IMR-90 (cell line): ENCODE measurements at regions of chr19 and their contacts with region 1.

Region 1: GRCh38 chr19:54481322-54481930 is 8.3 kb upstream of the CDC42EP5 start:
- DNase-seq: peak; percentile 33
- ATAC-seq: peak; percentile 72; the same call in 1 of the 2 replicates
- H3K4me3 ChIP-seq: no peak overlapping the region
- H3K27ac ChIP-seq: no peak overlapping the region
- H3K4me1 ChIP-seq: no peaks in the 10 kb centered on the region
- H3K27me3 ChIP-seq: 0 out of 2 replicates have a peak, but pooled peaks cover 2% of the 10 kb centered on the region
- CTCF ChIP-seq: peak; percentile 60
- POLR2A ChIP-seq: no peak
- RAD21 ChIP-seq: peak; percentile 51

Region 2: DNA sequence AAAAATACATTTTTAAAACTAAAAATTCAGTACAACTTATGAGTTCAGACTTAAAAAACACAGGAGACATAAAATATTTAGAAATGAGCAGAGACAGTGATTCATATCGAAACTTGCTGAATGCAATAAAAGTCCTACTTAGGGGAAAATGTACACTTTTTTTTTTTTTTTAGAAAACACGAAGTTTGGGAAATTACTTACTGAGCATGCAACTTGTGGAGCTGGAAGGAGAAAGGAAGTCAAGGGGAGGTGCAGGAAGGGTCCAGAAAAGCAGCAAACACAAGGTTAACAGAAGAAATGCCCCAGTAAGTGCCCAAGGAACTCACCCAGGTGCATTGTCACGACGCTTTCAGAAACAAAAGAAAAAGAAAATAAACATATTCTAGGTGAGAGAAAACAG is 98.1 kb before region 1 on chr19:
- CTCF ChIA-PET with region 1: no interaction called
- POLR2A ChIA-PET with region 1: no interaction called
- dilution Hi-C with region 1: no loop called
- in situ Hi-C with region 1: no loop called
- intact Hi-C with region 1: no loop called
- DNase-seq: no peak
- ATAC-seq: no peak
- H3K4me3 ChIP-seq: no peak overlapping the region
- H3K27ac ChIP-seq: no peak overlapping the region
- H3K4me1 ChIP-seq: no peaks in the 10 kb centered on the region
- H3K27me3 ChIP-seq: no peaks in the 10 kb centered on the region
- CTCF ChIP-seq: no peak
- POLR2A ChIP-seq: no peak
- RAD21 ChIP-seq: no peak

Region 3: GRCh38 chr19:54674021-54674617 is 192.7 kb after region 1 on chr19:
- CTCF ChIA-PET with region 1: interaction called, 8 read pairs
- POLR2A ChIA-PET with region 1: no interaction called
- dilution Hi-C with region 1: no loop called
- in situ Hi-C with region 1: no loop called
- intact Hi-C with region 1: loop called (anchors 1 kb)
- DNase-seq: no peak
- ATAC-seq: no peak
- H3K4me3 ChIP-seq: no peak overlapping the region
- H3K27ac ChIP-seq: no peak overlapping the region
- H3K4me1 ChIP-seq: no peaks in the 10 kb centered on the region
- H3K27me3 ChIP-seq: no peaks in the 10 kb centered on the region
- CTCF ChIP-seq: peak; percentile 29; the same call in 1 of the 2 replicates
- POLR2A ChIP-seq: no peak
- RAD21 ChIP-seq: no peak

Region 4: DNA sequence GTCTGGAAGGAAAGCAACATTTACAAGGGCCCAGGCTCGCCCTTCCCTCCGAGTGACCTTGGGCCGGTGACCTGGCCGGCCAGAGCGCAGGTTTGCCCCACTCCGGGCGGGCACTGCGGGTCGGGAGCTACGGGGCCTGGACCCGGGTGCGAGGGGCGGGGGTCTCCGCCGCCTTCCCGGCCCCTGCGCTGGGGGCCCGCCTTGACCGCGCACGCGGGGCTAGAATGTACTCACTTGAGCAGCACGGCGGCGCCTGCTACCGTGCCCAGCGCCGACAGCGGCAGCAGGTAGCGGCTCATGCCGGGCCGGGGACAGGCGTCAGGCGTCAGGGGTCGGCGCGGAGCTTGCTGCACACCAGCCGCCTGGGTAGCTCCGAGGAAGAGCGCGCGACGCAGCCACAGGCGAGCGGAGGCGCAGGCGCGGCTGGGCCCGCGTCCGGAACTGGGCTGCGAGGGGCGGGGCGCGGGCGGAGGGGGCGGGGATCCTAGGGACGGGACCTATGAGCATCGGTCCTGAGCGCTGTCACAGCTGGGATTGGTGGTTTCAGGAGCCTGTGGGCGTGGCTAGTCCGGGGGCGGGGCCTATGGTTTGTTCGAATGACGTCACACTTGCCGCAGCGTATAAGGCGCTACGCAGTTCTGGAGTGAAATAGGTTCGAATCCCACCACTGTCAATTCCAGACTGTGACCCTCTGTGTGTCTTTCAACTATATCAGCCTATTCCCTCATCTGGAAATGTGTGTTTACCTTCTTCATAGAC is 581.5 kb after region 1 on chr19 and contains the start of gene RDH13:
- CTCF ChIA-PET with region 1: no interaction called
- POLR2A ChIA-PET with region 1: no interaction called
- dilution Hi-C with region 1: no loop called
- in situ Hi-C with region 1: no loop called
- intact Hi-C with region 1: loop called (anchors 10 kb)
- DNase-seq: peak; percentile 96
- ATAC-seq: peak; percentile 100
- H3K4me3 ChIP-seq: peak within 1 kb of the TSS; percentile 73
- H3K27ac ChIP-seq: peak within 1 kb of the TSS; percentile 10; the same call in 1 of the 2 replicates
- H3K4me1 ChIP-seq: 0 out of 2 replicates have a peak, but pooled peaks cover 2% of the 10 kb centered on the region
- H3K27me3 ChIP-seq: peaks cover 8% of the 10 kb centered on the region
- CTCF ChIP-seq: no peak
- POLR2A ChIP-seq: no peak
- RAD21 ChIP-seq: no peak
- total RNA-seq, gene RDH13: 7.5 and 8.3 TPM in 2 replicates

Region 5: DNA sequence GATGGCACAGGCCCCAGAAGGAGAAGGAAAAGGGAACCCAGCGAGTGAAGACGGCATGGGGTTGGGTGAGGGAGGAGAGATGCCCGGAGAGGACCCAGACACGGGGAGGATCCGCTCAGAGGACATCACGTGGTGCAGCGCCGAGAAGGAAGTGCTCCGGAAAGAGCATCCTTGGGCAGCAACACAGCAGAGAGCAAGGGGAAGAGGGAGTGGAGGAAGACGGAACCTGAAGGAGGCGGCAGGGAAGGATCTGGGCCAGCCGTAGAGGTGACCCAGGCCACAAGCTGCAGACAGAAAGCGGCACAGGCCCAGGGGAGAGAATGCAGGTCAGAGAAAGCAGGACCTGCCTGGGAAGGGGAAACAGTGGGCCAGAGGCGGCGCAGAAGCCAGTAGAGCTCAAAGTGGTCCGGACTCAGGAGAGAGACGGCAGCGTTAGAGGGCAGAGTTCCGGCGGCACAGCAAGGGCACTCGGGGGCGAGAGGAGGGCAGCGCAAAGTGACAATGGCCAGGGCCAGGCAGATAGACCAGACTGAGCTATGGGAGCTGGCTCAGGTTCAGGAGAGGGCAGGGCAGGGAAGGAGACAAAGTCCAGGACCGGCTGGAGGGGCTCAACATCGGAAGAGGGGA is 634.9 kb after region 1 on chr19:
- CTCF ChIA-PET with region 1: no interaction called
- POLR2A ChIA-PET with region 1: no interaction called
- dilution Hi-C with region 1: no loop called
- in situ Hi-C with region 1: no loop called
- intact Hi-C with region 1: no loop called
- DNase-seq: peak; percentile 66
- ATAC-seq: peak; percentile 51
- H3K4me3 ChIP-seq: peak overlapping the region; percentile 55
- H3K27ac ChIP-seq: peak overlapping the region; percentile 70
- H3K4me1 ChIP-seq: peaks cover 13% of the 10 kb centered on the region
- H3K27me3 ChIP-seq: no peaks in the 10 kb centered on the region
- CTCF ChIP-seq: no peak
- POLR2A ChIP-seq: no peak
- RAD21 ChIP-seq: no peak